Endothelial cell of umbilical vein (primary cell): ENCODE measurements at regions of chr12 and their contacts with region 1.

Region 1: DNA sequence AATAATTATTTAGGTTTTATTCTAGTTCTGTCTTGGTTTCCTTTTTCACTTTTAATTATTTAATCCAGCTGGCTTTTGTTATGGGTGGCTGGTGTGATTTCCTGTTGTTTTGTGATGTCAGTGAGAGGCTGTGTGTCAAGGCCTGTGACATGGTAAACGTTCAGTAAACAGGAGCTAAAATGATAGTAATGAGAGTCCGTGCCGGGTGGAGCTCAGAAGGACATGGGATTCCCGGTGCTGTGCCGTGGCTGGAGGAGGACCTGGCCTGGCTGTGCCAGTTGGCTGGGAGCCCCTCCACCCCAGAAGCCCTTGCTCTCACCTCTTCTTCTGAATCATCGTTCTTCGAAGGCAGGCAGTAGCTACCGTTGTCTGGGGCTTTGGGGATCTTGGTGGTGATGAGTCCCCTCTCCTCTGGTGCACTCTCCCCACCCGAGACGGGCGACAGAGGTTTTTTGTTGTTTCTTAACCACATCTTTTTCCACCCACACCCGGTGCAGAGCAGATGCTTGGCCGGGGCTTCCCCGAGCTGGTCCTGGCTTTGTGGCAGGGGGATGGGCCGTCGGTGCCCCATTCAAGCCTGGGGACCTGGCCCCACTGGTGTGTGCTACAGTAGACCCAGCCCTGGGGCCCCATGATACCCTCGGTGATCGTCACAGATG is 29.1 kb downstream of the SH2B3 start:
- DNase-seq: peak; percentile 83
- H3K4me3 ChIP-seq: peak overlapping the region in 1 of 3 experiments; percentile 27
- H3K27ac ChIP-seq: peak overlapping the region; percentile 85
- H3K4me1 ChIP-seq: peaks cover 90% of the 10 kb centered on the region
- H3K27me3 ChIP-seq: no peaks in the 10 kb centered on the region
- CTCF ChIP-seq: no peak
- POLR2A ChIP-seq: no peak

Region 2: DNA sequence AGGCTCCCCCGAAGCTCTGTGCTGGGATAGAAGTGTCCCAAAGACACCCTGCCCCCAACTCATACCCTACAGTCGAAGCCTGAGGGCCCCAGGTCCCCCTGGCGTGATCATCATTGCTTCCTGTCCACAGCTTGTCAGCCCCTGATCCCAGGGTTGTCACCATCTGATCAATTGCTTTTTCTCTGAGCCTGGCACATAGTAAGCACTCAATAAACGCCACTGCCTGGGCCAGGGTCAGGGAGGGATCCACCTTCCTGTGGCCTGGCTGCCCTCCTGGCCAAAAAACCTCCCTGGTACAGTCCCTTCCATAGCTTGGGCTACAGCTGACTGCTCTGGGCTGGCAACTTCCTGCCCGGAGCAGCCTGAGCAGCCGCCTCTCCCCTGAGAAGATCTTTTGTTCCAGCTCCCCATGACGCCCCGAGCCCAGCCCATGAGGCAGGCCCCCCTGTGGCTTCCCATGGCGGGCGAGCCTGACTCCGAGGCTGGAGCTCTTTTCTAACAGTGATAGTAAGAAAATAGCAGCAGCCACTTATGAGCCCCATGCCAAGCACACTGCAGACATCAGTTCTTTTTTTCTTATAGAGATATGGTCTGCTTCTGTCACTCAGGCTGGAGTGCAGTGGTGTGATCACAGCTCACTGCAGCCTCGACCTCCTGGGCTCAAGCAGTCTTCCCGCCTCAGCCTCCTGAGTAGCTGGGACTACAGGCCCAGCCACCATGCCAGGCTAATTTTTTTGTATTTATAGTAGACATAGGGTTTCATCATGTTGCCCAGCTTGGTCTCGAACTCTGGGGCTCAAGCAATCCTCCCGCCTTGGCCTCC is 22.6 kb before region 1 on chr12:
- CTCF ChIA-PET with region 1: interaction called, 15 read pairs
- POLR2A ChIA-PET with region 1: interaction called, 5 read pairs
- dilution Hi-C with region 1: no loop called
- intact Hi-C with region 1: loop called (anchors 1 kb)
- DNase-seq: peak; percentile 51
- H3K4me3 ChIP-seq: no peak overlapping the region
- H3K27ac ChIP-seq: peak overlapping the region; percentile 87
- H3K4me1 ChIP-seq: peaks cover 71% of the 10 kb centered on the region
- H3K27me3 ChIP-seq: no peaks in the 10 kb centered on the region
- CTCF ChIP-seq: no peak
- POLR2A ChIP-seq: no peak

Region 3: GRCh38 chr12:111616177-111616623 is 181.4 kb after region 1 on chr12:
- CTCF ChIA-PET with region 1: no interaction called
- POLR2A ChIA-PET with region 1: no interaction called
- dilution Hi-C with region 1: no loop called
- intact Hi-C with region 1: no loop called
- DNase-seq: no peak
- H3K4me3 ChIP-seq: no peak overlapping the region
- H3K27ac ChIP-seq: no peak overlapping the region
- H3K4me1 ChIP-seq: no peaks in the 10 kb centered on the region
- H3K27me3 ChIP-seq: no peaks in the 10 kb centered on the region
- CTCF ChIP-seq: no peak
- POLR2A ChIP-seq: no peak

Region 4: GRCh38 chr12:112283546-112283945 is 848.7 kb after region 1 on chr12:
- CTCF ChIA-PET with region 1: no interaction called
- POLR2A ChIA-PET with region 1: no interaction called
- dilution Hi-C with region 1: no loop called
- intact Hi-C with region 1: no loop called
- DNase-seq: no peak
- H3K4me3 ChIP-seq: no peak overlapping the region
- H3K27ac ChIP-seq: no peak overlapping the region
- H3K4me1 ChIP-seq: no peaks in the 10 kb centered on the region
- H3K27me3 ChIP-seq: no peaks in the 10 kb centered on the region
- CTCF ChIP-seq: no peak
- POLR2A ChIP-seq: no peak